HAP-1 (cell line): ENCODE measurements at regions of chr20 and their contacts with region 1.

Region 1: GRCh38 chr20:44217342-44218092 is 6.9 kb upstream of the OSER1 start:
- DNase-seq: peak; percentile 47 to 82
- H3K4me3 ChIP-seq: no peak overlapping the region
- H3K4me1 ChIP-seq: no peaks in the 10 kb centered on the region
- H3K27me3 ChIP-seq: no peaks in the 10 kb centered on the region

Region 2: GRCh38 chr20:44288252-44288651 is 70.7 kb after region 1 on chr20:
- in situ Hi-C with region 1: no loop called
- DNase-seq: no peak
- H3K4me3 ChIP-seq: no peak overlapping the region
- H3K4me1 ChIP-seq: no peaks in the 10 kb centered on the region
- H3K27me3 ChIP-seq: no peaks in the 10 kb centered on the region; the same call in 1 of the 2 replicates

Region 3: DNA sequence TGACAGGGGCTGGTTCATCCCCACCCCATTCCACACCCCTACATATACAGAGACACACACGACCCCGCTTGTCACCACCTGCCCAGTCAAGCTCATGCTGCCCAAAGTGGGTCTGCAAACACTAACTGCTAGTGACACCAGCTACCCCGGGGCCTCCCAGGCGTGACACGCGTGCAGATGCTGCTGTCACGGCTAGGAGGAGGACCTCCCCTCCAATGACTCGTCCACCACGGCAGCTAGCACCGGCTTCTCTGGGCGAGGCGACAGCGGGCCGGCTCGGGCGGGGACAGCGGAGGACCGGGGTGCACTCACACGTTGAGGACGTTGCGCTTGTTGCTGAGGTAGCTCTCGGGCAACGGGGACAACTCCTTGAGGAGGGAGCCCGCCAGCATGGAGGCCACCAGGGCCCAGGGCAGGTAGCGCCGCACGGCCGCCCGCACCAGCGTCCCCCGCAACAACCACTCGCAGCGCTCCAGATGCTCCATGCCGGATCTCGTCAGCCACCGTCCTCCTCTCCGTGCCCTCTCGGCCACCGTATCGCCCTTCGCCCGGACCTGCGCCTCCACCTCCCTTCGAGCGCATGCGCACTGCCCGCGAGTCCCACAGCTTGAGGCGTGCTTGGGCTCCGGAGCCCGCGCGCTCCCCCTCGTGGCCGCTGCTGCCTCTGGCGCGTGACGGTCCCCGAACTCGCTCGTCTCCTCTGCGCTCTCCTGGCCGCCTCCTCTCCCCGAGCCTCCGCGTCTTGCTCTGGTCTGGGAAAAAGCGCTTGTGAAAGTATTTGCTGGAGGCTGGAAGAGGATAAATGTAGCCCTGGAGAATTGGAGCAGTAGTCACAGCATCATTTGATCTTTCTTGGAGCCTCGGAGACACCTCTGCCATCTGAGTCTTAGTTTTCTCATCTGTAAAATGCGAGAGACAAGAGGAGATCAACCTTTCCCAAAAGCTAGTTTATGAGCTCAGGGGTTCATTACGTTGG is 93.4 kb after region 1 on chr20 and contains the start of gene FITM2:
- in situ Hi-C with region 1: loop called (anchors 5 kb)
- DNase-seq: peak; percentile 85 to 98
- H3K4me3 ChIP-seq: peak within 1 kb of the TSS; percentile 77
- H3K4me1 ChIP-seq: no peaks in the 10 kb centered on the region
- H3K27me3 ChIP-seq: no peaks in the 10 kb centered on the region